Activated T-helper 2 cell treated with anti-CD3 and anti-CD28 coated beads, Interferon-gamma antibody, Interleukin-2, Interleukin-4, amounts not matched to agents 10 μg/mL and 5 μg/mL and 100 μg/mL, durations not matched to agents 14 hours and 24 hours and 36 hours (primary cell): ENCODE measurements at regions of chr7 and their contacts with region 1.

Region 1: DNA sequence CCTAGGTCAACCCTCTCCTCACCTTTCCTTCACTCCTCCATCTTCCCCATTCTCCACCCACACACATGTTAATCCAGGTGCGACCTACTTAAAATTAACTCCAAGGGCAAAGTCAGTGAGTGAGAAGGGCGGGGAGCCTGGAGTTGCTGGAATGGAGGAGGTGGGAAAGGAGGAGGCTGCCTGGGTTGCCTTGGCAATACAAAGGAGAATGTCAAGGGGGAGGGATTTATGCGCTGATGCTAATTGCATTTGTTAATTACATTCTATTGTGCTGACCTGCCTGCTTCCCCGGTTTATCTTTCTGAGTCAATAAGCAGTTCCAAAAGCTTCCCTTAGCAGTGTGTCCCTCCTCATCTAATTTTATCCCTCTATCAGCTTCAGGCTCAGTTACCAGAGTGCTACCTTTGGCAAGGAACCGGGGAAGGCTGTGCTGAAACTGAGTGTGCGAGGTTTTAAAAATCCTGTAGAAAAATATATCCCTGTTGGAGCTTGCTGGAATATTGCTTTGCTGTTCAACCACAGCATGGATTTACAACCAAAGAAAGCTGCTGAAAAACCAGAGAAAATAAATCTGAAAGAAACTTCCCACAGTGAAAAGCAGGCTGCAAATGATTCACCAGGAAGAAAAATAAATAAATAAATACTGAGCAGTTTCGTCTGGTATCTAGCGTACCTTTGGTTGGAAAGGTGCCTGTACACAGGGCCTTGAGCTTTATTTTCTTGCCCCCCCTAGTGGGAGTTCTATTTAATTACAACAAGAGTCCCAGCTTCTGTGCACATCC is 113.2 kb upstream of the DGKB start:
- DNase-seq: no peak
- H3K4me3 Mint-ChIP-seq: no peak overlapping the region
- H3K27ac Mint-ChIP-seq: no peak overlapping the region
- H3K4me1 Mint-ChIP-seq: no peaks in the 10 kb centered on the region
- H3K27me3 Mint-ChIP-seq: no peaks in the 10 kb centered on the region

Region 2: DNA sequence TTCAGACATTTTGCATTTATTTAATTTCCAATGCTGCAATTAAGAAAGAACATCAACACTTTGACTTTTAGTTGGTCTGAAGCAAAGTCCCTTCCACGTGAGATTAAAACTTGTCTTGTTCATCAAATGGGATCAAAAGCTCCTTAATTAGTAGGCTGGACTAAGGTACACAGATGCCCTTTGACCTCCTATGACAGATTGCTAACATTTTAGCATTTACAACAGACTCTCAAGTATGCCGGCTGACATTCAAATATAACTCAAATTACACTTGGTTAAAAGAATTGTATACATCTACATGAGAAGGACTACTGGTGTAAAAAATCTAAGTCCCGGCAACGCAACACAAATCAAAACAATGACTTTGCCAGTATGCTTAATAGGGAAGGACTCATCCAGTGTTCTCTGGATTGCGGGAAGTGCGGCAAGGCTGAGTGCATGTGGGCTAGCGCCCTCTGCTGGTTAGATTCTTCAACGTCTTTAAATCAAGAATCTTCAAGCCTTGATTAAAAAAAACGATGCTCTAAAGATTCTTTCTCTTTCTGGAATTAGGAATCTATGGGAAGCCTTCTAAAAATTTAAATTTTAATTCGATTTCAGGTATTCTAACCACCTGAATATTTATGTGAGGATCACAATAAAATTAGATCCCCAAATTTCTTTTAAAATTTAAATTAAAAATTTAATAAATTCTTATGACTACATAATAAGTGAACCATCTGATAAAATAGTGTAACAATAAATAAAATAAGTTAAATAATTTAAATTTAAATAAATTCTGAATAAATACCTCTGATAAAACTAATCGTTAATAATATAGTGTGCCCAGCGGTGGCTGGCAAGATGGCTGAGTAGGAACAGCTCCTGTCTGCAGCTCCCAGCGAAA is 557.9 kb before region 1 on chr7:
- intact Hi-C with region 1: no loop called
- DNase-seq: peak; percentile 10
- H3K4me3 Mint-ChIP-seq: no peak overlapping the region
- H3K27ac Mint-ChIP-seq: no peak overlapping the region
- H3K4me1 Mint-ChIP-seq: no peaks in the 10 kb centered on the region
- H3K27me3 Mint-ChIP-seq: no peaks in the 10 kb centered on the region

Region 3: DNA sequence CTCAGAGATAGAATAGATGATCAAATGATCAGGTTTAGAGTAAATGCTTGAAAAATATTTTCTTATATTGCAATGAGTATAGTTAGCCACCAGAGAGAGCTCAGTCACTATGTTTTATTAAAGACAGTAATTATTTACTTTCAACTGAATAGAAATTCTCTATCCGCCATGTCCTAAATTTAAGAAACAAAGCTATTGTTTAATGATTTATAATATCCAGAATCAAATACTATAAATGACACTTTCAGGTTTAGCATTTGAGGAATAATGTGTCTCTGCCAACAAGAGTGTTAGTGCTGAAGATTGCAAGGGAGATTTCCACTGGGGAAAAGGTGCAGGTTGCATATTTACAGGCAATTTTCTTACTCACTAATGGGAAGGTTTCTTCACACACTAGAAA is 297.9 kb before region 1 on chr7:
- intact Hi-C with region 1: loop called (anchors 2 kb)
- DNase-seq: no peak
- H3K4me3 Mint-ChIP-seq: no peak overlapping the region
- H3K27ac Mint-ChIP-seq: no peak overlapping the region
- H3K4me1 Mint-ChIP-seq: peaks cover 4% of the 10 kb centered on the region
- H3K27me3 Mint-ChIP-seq: no peaks in the 10 kb centered on the region

Region 4: DNA sequence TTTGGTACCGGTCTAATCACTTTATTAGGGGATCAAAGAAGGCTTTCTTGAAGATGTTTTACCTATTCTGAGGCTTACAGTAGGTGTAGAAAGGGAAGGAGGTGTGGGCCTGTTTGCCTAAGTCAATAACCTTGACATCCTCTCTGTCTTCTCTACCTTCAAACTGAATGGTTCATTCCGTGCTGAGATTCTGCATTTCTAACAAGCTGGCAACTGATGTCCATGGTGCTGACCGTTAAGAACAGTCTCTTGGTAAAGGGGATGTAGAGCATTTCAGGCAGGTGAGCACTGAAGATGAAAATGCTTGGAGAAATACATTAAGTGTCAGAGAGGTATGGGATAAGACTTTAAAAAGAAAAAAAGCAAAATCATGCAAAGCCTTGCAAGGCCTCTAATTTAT is 61.7 kb before region 1 on chr7:
- intact Hi-C with region 1: no loop called
- DNase-seq: no peak
- H3K4me3 Mint-ChIP-seq: no peak overlapping the region
- H3K27ac Mint-ChIP-seq: no peak overlapping the region
- H3K4me1 Mint-ChIP-seq: no peaks in the 10 kb centered on the region
- H3K27me3 Mint-ChIP-seq: no peaks in the 10 kb centered on the region